Psoas muscle (tissue), 8 donors: ENCODE measurements at regions of chr2 and their contacts with region 1.

Region 1: GRCh38 chr2:143259368-143259958 is 130.2 kb downstream of the ARHGAP15 start:
- DNase-seq: peak; percentile 21 to 38
- ATAC-seq: peak in 1 of 4 donors; percentile 69
- H3K4me3 ChIP-seq: no peak overlapping the region
- H3K27ac ChIP-seq: no peak overlapping the region
- H3K4me1 ChIP-seq: no peaks in the 10 kb centered on the region
- H3K27me3 ChIP-seq: no peaks in the 10 kb centered on the region
- CTCF ChIP-seq: peak; percentile 62

Region 2: GRCh38 chr2:143034292-143035074 is 225.0 kb before region 1 on chr2:
- intact Hi-C with region 1: loop called in 1 of 2 experiments (anchors 10 kb)
- DNase-seq: peak in 1 of 2 donors; percentile 13
- ATAC-seq: peak; percentile 70 to 86 (median 84)
- H3K4me3 ChIP-seq: no peak overlapping the region
- H3K27ac ChIP-seq: no peak overlapping the region
- H3K4me1 ChIP-seq: no peaks in the 10 kb centered on the region
- H3K27me3 ChIP-seq: no peaks in the 10 kb centered on the region
- CTCF ChIP-seq: peak; percentile 95

Region 3: DNA sequence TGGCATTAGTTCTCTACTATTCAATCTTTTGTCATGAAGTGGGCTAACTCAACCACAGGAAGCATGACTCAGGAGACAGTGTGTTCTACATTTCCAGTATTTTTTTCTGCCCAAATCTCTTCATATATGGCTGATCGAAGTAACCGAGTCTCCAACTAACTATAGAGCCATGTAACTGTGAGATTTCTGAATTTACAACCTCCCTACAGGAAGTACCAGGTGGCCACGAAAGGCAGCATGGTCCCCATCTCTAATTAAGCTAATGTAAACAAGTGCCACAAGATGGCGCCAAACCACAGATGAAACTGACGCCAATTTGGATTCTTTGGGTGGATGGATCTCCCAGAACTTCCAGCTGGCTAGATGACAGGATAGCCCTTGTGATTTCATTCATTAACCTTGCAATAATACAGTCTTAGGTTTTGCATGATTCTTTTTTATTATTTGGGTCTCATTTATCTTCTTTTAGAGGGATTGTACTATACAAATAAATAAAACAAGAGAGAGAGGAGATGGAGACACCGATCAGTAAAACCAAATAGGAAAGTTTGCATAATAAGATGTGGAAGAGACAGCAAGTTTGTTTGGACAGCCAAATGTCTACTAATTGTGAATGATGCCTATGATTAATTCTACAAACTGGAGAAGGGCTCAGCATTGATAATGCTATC is 148.6 kb before region 1 on chr2:
- intact Hi-C with region 1: loop called in 1 of 2 experiments (anchors 5 kb)
- DNase-seq: peak; percentile 16 to 23
- ATAC-seq: no peak
- H3K4me3 ChIP-seq: no peak overlapping the region
- H3K27ac ChIP-seq: no peak overlapping the region
- H3K4me1 ChIP-seq: no peaks in the 10 kb centered on the region
- H3K27me3 ChIP-seq: no peaks in the 10 kb centered on the region
- CTCF ChIP-seq: peak; percentile 48

Region 4: DNA sequence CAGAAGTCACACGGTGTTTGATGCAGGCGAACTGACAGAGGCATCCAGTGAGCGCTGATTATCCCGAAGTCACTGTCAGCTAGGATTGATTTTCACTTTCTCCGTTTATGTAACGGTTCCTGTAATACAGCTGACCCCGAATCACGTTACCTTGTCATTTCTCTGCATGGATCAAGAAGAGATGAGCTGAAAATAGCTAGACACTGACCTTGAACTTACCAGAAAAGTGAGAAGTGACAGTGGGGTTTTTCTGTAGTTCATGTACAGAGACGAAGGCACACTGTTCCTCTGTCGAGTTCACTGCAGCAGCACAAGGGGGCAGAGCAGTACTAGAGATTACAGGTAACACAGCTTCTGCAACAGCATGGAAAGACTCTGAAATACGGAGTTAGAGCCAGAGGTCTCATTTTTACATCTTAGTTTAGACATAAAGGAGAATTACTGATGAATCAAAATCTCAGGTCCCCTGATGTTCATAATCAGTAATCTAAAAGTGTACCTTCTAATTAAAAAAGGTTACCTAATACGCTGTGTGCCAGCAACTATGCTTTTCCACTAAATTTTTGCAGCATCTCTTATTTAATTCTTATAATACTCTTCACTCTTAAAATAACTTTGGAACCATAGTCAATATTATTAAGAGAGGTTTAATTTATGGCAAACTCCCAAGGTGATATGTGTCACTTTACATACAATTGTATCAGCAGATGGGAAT is 97.2 kb before region 1 on chr2:
- intact Hi-C with region 1: loop called in 1 of 2 experiments (anchors 10 kb)
- DNase-seq: peak in 1 of 2 donors; percentile 14
- ATAC-seq: peak in 1 of 4 donors; percentile 58
- H3K4me3 ChIP-seq: no peak overlapping the region
- H3K27ac ChIP-seq: no peak overlapping the region
- H3K4me1 ChIP-seq: no peaks in the 10 kb centered on the region
- H3K27me3 ChIP-seq: no peaks in the 10 kb centered on the region
- CTCF ChIP-seq: peak; percentile 41

Region 5: DNA sequence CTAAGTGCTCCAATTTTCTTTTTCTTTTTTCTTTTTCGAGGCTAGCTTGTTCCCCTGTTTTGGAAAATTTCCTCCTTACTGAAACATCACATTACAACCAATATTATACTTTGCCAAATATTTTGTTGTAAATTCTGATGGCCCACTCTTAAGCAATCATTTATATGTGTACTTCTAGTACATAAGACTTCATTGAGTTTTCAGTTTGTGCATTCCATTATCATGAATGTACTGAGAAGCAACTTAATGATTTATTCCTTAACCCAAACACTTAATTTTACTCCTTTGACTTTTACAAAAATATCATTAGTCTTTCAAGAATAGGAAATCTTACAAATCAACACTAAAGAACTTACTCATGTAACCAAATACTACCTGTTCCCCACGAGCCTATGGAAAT is 112.2 kb after region 1 on chr2:
- intact Hi-C with region 1: no loop called
- DNase-seq: no peak
- ATAC-seq: no peak
- H3K4me3 ChIP-seq: no peak overlapping the region
- H3K27ac ChIP-seq: no peak overlapping the region
- H3K4me1 ChIP-seq: no peaks in the 10 kb centered on the region
- H3K27me3 ChIP-seq: no peaks in the 10 kb centered on the region
- CTCF ChIP-seq: no peak